Gastrocnemius medialis (tissue), 4 donors: ENCODE measurements at regions of chr9 and their contacts with region 1.

Region 1: GRCh38 chr9:126228781-126229444 is 97.7 kb upstream of the MVB12B start:
- DNase-seq: peak; percentile 28 to 37
- ATAC-seq: peak; percentile 72 to 88
- H3K4me3 ChIP-seq: no peak overlapping the region
- H3K27ac ChIP-seq: no peak overlapping the region
- H3K4me1 ChIP-seq: no peaks in the 10 kb centered on the region
- H3K27me3 ChIP-seq: peaks cover 0 to 6% (median 2%) of the 10 kb centered on the region in 3 donors
- CTCF ChIP-seq: peak; percentile 65 to 86 (median 74)
- POLR2A ChIP-seq: no peak

Region 2: GRCh38 chr9:125407974-125408900 is 820.7 kb before region 1 on chr9:
- in situ Hi-C with region 1: loop called (anchors 5 to 10 kb)
- intact Hi-C with region 1: loop called (anchors 1 kb)
- DNase-seq: peak; percentile 30 to 34
- ATAC-seq: peak; percentile 65 to 73
- H3K4me3 ChIP-seq: peak overlapping the region; percentile 50 to 59 (median 54)
- H3K27ac ChIP-seq: no peak overlapping the region
- H3K4me1 ChIP-seq: peaks cover 3 to 8% of the 10 kb centered on the region in 2 donors
- H3K27me3 ChIP-seq: peaks cover 17 to 25% (median 24%) of the 10 kb centered on the region in 3 donors
- CTCF ChIP-seq: peak; percentile 24 to 85 (median 69)
- POLR2A ChIP-seq: no peak